Colonic mucosa (tissue), 4 donors: ENCODE measurements at regions of chr3 and their contacts with region 1.

Region 1: DNA sequence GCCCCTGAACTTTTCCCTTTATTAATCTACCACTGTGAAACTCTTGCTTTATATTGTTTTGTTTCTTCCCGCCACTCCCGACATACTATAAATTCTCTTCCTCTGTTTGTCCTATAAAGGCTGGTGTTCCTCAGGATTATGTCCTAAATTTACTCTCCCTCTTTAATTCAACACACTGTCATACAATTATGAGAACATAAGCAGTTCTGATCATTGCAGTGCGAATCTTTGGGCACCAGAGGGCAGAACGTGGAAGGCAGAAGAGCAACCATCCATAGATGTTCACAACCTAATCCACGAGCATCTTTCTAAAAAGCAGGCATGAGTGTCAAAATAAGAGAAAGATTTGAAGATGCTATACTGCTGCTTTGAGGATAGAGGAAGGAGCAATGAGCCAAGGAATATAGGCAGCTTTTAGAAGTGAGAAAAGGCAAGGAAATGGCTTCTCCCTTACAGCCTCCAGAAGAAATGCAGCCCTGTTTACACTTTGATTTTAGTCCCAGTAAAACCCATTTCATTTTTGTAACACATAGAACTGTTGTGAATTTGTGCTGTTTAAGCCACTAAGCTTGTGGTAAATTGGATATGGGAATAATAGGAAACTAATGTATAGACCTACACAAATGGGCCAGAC is 179.4 kb downstream of the GBE1 start:
- DNase-seq: peak; percentile 31
- H3K4me3 ChIP-seq: no peak overlapping the region
- H3K27ac ChIP-seq: no peak overlapping the region
- H3K4me1 ChIP-seq: no peaks in the 10 kb centered on the region
- H3K27me3 ChIP-seq: no peaks in the 10 kb centered on the region
- CTCF ChIP-seq: peak; percentile 30

Region 2: DNA sequence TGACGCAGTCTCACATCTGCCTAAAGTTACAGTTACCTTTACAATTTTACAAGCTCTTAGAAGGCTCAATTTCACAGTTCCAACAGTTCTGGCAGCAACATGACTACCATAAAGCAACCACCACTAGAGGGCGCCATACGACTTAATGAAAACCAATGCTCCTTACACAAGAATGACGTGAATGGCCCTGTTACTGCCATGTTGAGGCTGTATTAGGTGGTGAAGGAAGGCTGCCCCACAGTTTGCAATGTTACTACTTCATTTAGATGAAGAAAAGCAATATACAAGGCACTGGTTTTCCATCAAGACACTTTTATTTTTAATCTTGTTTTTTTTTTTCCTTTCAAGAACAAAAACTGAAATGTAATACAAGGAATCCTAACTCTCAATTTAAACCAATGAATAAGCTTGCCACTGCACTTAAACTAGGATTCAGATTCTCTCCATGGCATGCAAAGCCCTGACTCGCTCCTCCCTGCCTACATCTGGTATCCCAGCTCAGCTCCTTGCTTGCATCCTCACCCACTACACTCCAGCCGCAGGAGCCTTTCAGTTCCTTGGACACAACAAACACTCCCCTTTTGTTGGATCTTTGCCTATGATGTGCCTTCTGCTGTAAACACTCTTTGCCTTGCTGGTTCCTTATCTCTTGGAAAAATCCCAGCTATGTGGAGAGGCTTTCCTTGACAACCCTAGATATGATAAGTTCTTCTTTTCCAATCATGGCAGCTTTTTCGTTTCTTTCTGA is 91.4 kb before region 1 on chr3:
- intact Hi-C with region 1: loop called (anchors 10 kb)
- DNase-seq: peak; percentile 87
- H3K4me3 ChIP-seq: no peak overlapping the region
- H3K27ac ChIP-seq: no peak overlapping the region
- H3K4me1 ChIP-seq: no peaks in the 10 kb centered on the region
- H3K27me3 ChIP-seq: no peaks in the 10 kb centered on the region
- CTCF ChIP-seq: peak; percentile 67

Region 3: DNA sequence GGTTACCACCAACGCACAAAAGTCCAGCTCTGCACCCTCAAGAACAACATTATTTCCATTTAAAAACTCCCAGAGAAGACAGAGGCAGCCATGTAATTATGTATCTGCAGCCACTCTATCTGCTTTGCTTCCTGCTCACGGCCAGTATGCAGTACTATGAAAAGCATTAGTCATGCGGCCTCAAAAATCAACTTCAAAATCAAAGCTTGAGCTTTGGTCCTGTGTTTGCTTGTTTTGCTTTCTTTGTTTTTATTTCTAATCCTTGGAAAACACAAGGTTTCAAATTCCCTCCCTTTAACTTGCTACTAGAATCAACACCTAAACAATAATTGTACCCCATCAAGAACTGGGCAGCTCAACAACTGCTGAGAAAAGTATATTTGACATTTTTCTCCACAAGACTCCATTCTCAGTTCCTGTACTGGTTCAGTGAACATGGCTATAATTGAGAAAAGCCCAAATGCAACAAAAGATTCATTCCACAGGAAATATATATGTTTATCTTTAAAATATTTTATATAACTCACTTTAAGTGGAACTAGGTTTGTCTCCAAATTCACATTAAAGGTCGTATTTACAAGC is 141.7 kb after region 1 on chr3:
- intact Hi-C with region 1: no loop called
- DNase-seq: no peak
- H3K4me3 ChIP-seq: no peak overlapping the region
- H3K27ac ChIP-seq: no peak overlapping the region
- H3K4me1 ChIP-seq: no peaks in the 10 kb centered on the region
- H3K27me3 ChIP-seq: no peaks in the 10 kb centered on the region
- CTCF ChIP-seq: no peak